ENCODE measurements at regions of chr17 and their contacts with region 1.

Region 1: GRCh38 chr17:48351831-48352332 is 78.1 kb downstream of the SKAP1 start:
- DNase-seq: peak in 2 of 9 experiments; percentile 54 to 70
- ATAC-seq: peak; percentile 76
- H3K4me3 ChIP-seq: no peak overlapping the region
- H3K4me3 Mint-ChIP-seq: no peak overlapping the region
- H3K27ac ChIP-seq: no peak overlapping the region
- H3K27ac Mint-ChIP-seq: no peak overlapping the region
- H3K4me1 ChIP-seq: peaks cover 5% of the 10 kb centered on the region
- H3K4me1 Mint-ChIP-seq: peaks cover 16% of the 10 kb centered on the region
- H3K27me3 ChIP-seq: no peaks in the 10 kb centered on the region
- H3K27me3 Mint-ChIP-seq: no peaks in the 10 kb centered on the region
- CTCF ChIP-seq: peak; percentile 87

Region 2: GRCh38 chr17:48294806-48295361 is 57.0 kb before region 1 on chr17:
- CTCF ChIA-PET with region 1: no interaction called
- POLR2A ChIA-PET with region 1: no interaction called
- intact Hi-C with region 1: no loop called
- DNase-seq: peak in 2 of 9 experiments; percentile 16 to 42
- ATAC-seq: peak; percentile 43
- H3K4me3 ChIP-seq: peak overlapping the region; percentile 1 to 19
- H3K4me3 Mint-ChIP-seq: peak overlapping the region; percentile 76
- H3K27ac ChIP-seq: peak overlapping the region; percentile 10 to 67
- H3K27ac Mint-ChIP-seq: peak overlapping the region; percentile 92
- H3K4me1 ChIP-seq: peaks cover 33% of the 10 kb centered on the region
- H3K4me1 Mint-ChIP-seq: peaks cover 70% of the 10 kb centered on the region
- H3K27me3 ChIP-seq: no peaks in the 10 kb centered on the region
- H3K27me3 Mint-ChIP-seq: no peaks in the 10 kb centered on the region
- CTCF ChIP-seq: no peak

Region 3: DNA sequence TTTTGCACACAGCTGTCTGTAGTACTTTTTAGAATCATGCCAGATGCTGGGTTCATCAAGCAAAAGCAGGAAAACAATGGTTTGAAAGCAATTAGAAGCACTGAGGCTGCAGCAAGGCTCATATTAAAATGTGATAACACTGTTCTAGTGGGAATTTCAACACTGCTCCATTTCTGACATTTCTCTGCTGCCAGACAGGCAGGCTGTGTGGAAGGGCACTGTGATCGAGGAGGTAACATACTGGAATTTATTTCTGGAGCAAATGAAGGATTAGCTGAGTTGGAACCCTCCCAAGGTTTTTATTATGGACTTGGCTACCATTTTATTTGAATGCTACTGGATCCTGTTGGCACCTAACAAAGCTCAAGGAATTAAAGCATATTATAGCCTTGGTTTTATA is 11.3 kb after region 1 on chr17:
- CTCF ChIA-PET with region 1: interaction called, 28 read pairs
- POLR2A ChIA-PET with region 1: interaction called, 5 read pairs
- intact Hi-C with region 1: no loop called
- DNase-seq: no peak
- ATAC-seq: no peak
- H3K4me3 ChIP-seq: no peak overlapping the region
- H3K4me3 Mint-ChIP-seq: no peak overlapping the region
- H3K27ac ChIP-seq: no peak overlapping the region
- H3K27ac Mint-ChIP-seq: no peak overlapping the region
- H3K4me1 ChIP-seq: peaks cover 3% of the 10 kb centered on the region
- H3K4me1 Mint-ChIP-seq: peaks cover 44% of the 10 kb centered on the region
- H3K27me3 ChIP-seq: no peaks in the 10 kb centered on the region
- H3K27me3 Mint-ChIP-seq: no peaks in the 10 kb centered on the region
- CTCF ChIP-seq: no peak

Region 4: DNA sequence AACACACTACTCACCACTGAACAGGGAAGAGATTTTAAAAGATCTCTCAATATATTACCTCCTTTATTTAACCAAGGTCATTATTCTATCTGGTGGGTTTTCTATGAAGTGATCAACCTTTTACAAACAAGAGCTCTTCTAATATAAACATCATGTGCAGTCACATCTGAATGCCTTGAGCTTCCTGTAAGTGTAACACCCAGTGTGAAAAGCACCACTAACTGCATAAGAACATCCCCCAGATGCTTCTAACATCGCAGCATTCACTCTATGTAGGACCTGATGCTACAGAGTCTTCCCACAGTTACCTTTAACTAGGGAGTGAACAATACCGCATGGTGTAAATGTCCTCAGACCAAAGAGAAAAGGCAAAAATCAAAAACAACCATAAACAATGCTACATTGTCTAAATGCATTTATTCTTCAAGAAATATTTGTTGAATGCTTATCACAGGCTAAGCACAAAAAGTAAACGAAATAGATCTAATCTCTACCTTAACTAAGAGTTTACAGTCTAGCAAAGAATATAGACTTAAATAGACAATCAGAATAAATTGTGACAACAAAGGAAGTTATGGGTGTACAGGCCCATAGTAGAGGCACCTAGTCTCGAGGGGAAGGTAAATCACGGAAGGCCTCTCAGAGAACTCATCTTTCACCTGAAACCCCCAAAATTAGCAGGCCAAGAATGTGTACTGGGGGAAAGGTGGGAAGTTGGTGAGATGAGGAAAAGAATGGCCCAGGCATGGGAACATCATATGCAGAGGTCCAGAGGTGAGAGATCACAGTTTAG is 61.9 kb after region 1 on chr17:
- CTCF ChIA-PET with region 1: interaction called, 7 read pairs
- POLR2A ChIA-PET with region 1: no interaction called
- intact Hi-C with region 1: loop called in 1 of 2 experiments (anchors 5 kb)
- DNase-seq: peak in 2 of 9 experiments; percentile 26 to 56
- ATAC-seq: peak; percentile 63
- H3K4me3 ChIP-seq: no peak overlapping the region
- H3K4me3 Mint-ChIP-seq: peak overlapping the region; percentile 54
- H3K27ac ChIP-seq: peak overlapping the region; percentile 0 to 50
- H3K27ac Mint-ChIP-seq: peak overlapping the region; percentile 93
- H3K4me1 ChIP-seq: peaks cover 78% of the 10 kb centered on the region
- H3K4me1 Mint-ChIP-seq: peaks cover 83% of the 10 kb centered on the region
- H3K27me3 ChIP-seq: no peaks in the 10 kb centered on the region
- H3K27me3 Mint-ChIP-seq: no peaks in the 10 kb centered on the region
- CTCF ChIP-seq: no peak

Region 5: DNA sequence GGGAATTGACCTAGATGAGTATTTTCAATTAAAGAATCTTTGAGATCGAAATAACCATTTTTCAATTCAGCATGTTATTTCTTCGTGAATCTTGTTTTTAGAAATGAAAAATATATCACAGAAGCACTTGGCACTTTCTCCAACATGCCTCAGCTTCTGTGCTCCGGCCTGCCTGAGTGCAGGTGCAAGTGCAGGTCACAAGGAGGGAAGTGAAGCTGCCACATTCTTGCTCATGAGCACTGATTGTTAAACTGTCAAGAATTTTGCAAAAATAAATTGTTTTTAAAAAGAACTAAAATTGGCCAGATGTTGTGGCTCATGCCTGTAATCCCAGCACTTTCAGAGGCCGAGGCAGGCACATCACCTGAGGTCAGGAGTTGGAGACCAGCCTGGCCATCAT is 116.4 kb after region 1 on chr17:
- CTCF ChIA-PET with region 1: interaction called, 17 read pairs
- POLR2A ChIA-PET with region 1: no interaction called
- intact Hi-C with region 1: no loop called
- DNase-seq: no peak
- ATAC-seq: no peak
- H3K4me3 ChIP-seq: no peak overlapping the region
- H3K4me3 Mint-ChIP-seq: no peak overlapping the region
- H3K27ac ChIP-seq: no peak overlapping the region
- H3K27ac Mint-ChIP-seq: no peak overlapping the region
- H3K4me1 ChIP-seq: peaks cover 16% of the 10 kb centered on the region
- H3K4me1 Mint-ChIP-seq: peaks cover 10% of the 10 kb centered on the region
- H3K27me3 ChIP-seq: no peaks in the 10 kb centered on the region
- H3K27me3 Mint-ChIP-seq: peaks cover 2% of the 10 kb centered on the region
- CTCF ChIP-seq: no peak

Region 6: GRCh38 chr17:48561884-48562810 is 210.3 kb after region 1 on chr17:
- CTCF ChIA-PET with region 1: no interaction called
- POLR2A ChIA-PET with region 1: no interaction called
- intact Hi-C with region 1: no loop called
- DNase-seq: peak in 1 of 9 experiments; percentile 49
- ATAC-seq: peak; percentile 84
- H3K4me3 ChIP-seq: no peak overlapping the region
- H3K4me3 Mint-ChIP-seq: no peak overlapping the region
- H3K27ac ChIP-seq: no peak overlapping the region
- H3K27ac Mint-ChIP-seq: peak overlapping the region; percentile 38
- H3K4me1 ChIP-seq: peaks cover 4% of the 10 kb centered on the region
- H3K4me1 Mint-ChIP-seq: peaks cover 5% of the 10 kb centered on the region
- H3K27me3 ChIP-seq: no peaks in the 10 kb centered on the region
- H3K27me3 Mint-ChIP-seq: peaks cover 3% of the 10 kb centered on the region
- CTCF ChIP-seq: no peak

Region 7: GRCh38 chr17:48586355-48587258 is 234.7 kb after region 1 on chr17:
- CTCF ChIA-PET with region 1: interaction called, 12 read pairs
- POLR2A ChIA-PET with region 1: no interaction called
- intact Hi-C with region 1: no loop called
- DNase-seq: peak in 4 of 9 experiments; percentile 29 to 60 (median 48)
- ATAC-seq: peak; percentile 22
- H3K4me3 ChIP-seq: peak overlapping the region; percentile 75 to 81
- H3K4me3 Mint-ChIP-seq: peak overlapping the region; percentile 96
- H3K27ac ChIP-seq: no peak overlapping the region
- H3K27ac Mint-ChIP-seq: peak overlapping the region; percentile 2
- H3K4me1 ChIP-seq: peaks cover 27% of the 10 kb centered on the region
- H3K4me1 Mint-ChIP-seq: peaks cover 32% of the 10 kb centered on the region
- H3K27me3 ChIP-seq: peaks cover 12 to 46% of the 10 kb centered on the region in 2 experiments
- H3K27me3 Mint-ChIP-seq: peaks cover 83% of the 10 kb centered on the region
- CTCF ChIP-seq: no peak

Measured in CD8-positive, alpha-beta T cell (primary cell).